Calu3 (cell line): ENCODE measurements at regions of chr6 and their contacts with region 1.

Region 1: GRCh38 chr6:86937219-86938079 is at the start of gene HTR1E:
- DNase-seq: peak; percentile 66
- H3K4me3 Mint-ChIP-seq: peak within 1 kb of the TSS; percentile 62
- H3K27ac Mint-ChIP-seq: no peak within 1 kb of the TSS
- H3K4me1 Mint-ChIP-seq: peaks cover 9% of the 10 kb centered on the region
- H3K27me3 Mint-ChIP-seq: peaks cover 77% of the 10 kb centered on the region
- CTCF ChIP-seq: no peak
- total RNA-seq, gene HTR1E: not detected in 2 replicates

Region 2: GRCh38 chr6:85642774-85643536 is 1294.5 kb before region 1 on chr6 and contains the start of gene SYNCRIP:
- CTCF ChIA-PET with region 1: no interaction called
- intact Hi-C with region 1: loop called (anchors 5 kb)
- DNase-seq: peak; percentile 99
- H3K4me3 Mint-ChIP-seq: peak within 1 kb of the TSS; percentile 88
- H3K27ac Mint-ChIP-seq: peak within 1 kb of the TSS; percentile 89
- H3K4me1 Mint-ChIP-seq: peaks cover 46% of the 10 kb centered on the region
- H3K27me3 Mint-ChIP-seq: no peaks in the 10 kb centered on the region
- CTCF ChIP-seq: no peak
- total RNA-seq, gene SYNCRIP: 153 and 164 TPM in 2 replicates

Region 3: DNA sequence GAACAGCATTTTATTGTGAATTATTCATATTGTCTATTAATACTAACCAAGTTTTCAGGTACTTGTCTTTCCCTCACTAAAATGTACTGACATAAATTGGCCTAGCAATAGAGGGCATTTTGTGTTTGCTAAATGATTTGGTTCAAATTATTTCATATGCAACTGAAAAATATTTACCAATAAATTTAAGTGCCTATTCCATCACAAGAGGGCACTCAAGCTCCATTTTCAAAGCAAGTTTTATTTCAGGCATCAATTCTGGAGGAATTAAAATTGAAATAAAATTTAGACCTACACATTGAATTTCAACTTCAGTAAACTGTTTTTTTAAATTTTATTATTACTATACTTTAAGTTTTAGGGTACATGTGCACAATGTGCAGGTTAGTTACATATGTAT is 1180.5 kb before region 1 on chr6:
- CTCF ChIA-PET with region 1: no interaction called
- intact Hi-C with region 1: loop called (anchors 5 kb)
- DNase-seq: no peak
- H3K4me3 Mint-ChIP-seq: no peak overlapping the region
- H3K27ac Mint-ChIP-seq: no peak overlapping the region
- H3K4me1 Mint-ChIP-seq: peaks cover 7% of the 10 kb centered on the region
- H3K27me3 Mint-ChIP-seq: peaks cover 23% of the 10 kb centered on the region
- CTCF ChIP-seq: peak; percentile 39

Region 4: GRCh38 chr6:85923013-85923430 is 1014.4 kb before region 1 on chr6:
- CTCF ChIA-PET with region 1: interaction called, 9 read pairs
- intact Hi-C with region 1: loop called (anchors 2 kb)
- DNase-seq: peak; percentile 53
- H3K4me3 Mint-ChIP-seq: no peak overlapping the region
- H3K27ac Mint-ChIP-seq: no peak overlapping the region
- H3K4me1 Mint-ChIP-seq: no peaks in the 10 kb centered on the region
- H3K27me3 Mint-ChIP-seq: peaks cover 38% of the 10 kb centered on the region
- CTCF ChIP-seq: peak; percentile 67

Region 5: GRCh38 chr6:86070151-86070550 is 867.3 kb before region 1 on chr6:
- CTCF ChIA-PET with region 1: no interaction called
- intact Hi-C with region 1: loop called (anchors 10 kb)
- DNase-seq: no peak
- H3K4me3 Mint-ChIP-seq: no peak overlapping the region
- H3K27ac Mint-ChIP-seq: no peak overlapping the region
- H3K4me1 Mint-ChIP-seq: no peaks in the 10 kb centered on the region
- H3K27me3 Mint-ChIP-seq: no peaks in the 10 kb centered on the region
- CTCF ChIP-seq: no peak

Region 6: GRCh38 chr6:86856937-86857563 is 80.4 kb before region 1 on chr6:
- CTCF ChIA-PET with region 1: interaction called, 3 read pairs
- intact Hi-C with region 1: loop called (anchors 2 kb)
- DNase-seq: peak; percentile 67
- H3K4me3 Mint-ChIP-seq: no peak overlapping the region
- H3K27ac Mint-ChIP-seq: no peak overlapping the region
- H3K4me1 Mint-ChIP-seq: no peaks in the 10 kb centered on the region
- H3K27me3 Mint-ChIP-seq: no peaks in the 10 kb centered on the region
- CTCF ChIP-seq: peak; percentile 67

Region 7: DNA sequence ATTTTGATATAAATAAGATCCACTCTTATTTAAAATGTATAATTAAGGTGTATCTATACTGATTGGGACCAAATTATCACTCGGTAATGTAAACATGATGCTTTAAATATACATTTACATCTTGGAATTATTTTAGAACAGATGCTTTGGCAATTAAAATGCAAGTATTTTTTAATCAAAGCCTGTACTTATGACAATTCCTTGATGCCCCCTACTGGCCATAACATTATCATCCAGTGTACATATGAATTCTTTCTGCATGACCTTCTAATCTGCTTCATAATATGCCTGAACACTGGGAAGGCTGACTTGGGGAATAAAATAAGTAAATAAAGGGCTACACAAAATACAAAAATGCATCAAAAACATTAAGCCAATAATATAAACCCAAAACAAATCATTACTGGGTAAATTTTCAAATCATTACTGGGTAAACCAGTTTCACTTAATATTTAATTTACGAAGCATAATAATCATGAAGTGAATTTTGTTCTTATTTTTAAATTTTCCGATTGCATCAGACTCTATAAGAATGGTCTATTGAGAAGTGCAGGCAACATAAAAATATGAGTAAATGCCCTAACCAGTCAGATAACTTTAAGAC is 92.4 kb after region 1 on chr6:
- CTCF ChIA-PET with region 1: no interaction called
- intact Hi-C with region 1: loop called (anchors 5 kb)
- DNase-seq: peak; percentile 37
- H3K4me3 Mint-ChIP-seq: no peak overlapping the region
- H3K27ac Mint-ChIP-seq: no peak overlapping the region
- H3K4me1 Mint-ChIP-seq: no peaks in the 10 kb centered on the region
- H3K27me3 Mint-ChIP-seq: peaks cover 27% of the 10 kb centered on the region
- CTCF ChIP-seq: peak; percentile 37

Region 8: GRCh38 chr6:87054143-87054833 is 116.8 kb after region 1 on chr6:
- CTCF ChIA-PET with region 1: no interaction called
- intact Hi-C with region 1: no loop called
- DNase-seq: no peak
- H3K4me3 Mint-ChIP-seq: no peak overlapping the region
- H3K27ac Mint-ChIP-seq: no peak overlapping the region
- H3K4me1 Mint-ChIP-seq: no peaks in the 10 kb centered on the region
- H3K27me3 Mint-ChIP-seq: peaks cover 20% of the 10 kb centered on the region
- CTCF ChIP-seq: no peak

Region 9: DNA sequence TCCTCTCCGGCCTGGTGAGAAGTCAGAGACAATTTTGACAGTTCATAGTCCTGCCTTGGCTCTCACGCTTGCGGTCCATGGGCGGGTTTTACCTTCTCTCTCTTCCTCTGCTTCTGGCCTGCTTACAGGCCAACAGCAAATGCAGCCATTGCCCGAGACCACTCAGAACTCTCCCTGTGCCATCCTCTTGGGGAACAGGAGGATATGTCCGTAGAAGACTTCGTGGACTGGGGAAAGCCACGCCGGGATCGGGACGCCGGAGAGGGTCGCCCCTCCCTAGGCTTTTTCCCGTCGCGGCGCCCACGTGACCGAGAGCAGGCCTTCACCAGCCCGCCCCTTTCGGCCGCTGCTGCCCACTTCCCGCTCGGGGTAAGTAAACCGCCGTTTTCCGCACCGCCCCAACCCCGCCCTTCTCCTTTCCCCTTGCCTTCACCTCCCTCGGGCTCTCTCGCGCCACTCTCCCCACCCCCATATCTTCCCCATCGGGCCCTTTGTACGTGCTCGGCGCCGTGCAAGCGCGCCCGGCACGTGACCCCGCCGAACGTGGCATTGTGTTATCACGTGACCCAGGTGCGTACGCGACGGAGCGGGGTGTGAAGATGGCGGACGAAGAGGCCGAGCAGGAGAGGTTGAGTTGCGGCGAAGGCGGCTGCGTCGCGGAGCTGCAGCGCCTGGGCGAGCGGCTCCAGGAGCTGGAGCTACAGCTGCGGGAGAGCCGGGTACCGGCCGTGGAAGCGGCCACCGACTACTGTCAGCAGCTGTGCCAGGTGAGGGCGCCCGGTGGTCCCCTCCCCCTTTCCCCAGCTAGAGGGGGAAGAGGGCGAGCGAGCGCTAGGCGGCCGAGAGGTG is 217.8 kb after region 1 on chr6 and contains the start of gene ZNF292:
- CTCF ChIA-PET with region 1: no interaction called
- intact Hi-C with region 1: no loop called
- DNase-seq: peak; percentile 98
- H3K4me3 Mint-ChIP-seq: peak within 1 kb of the TSS; percentile 90
- H3K27ac Mint-ChIP-seq: peak within 1 kb of the TSS; percentile 91
- H3K4me1 Mint-ChIP-seq: peaks cover 19% of the 10 kb centered on the region
- H3K27me3 Mint-ChIP-seq: no peaks in the 10 kb centered on the region
- CTCF ChIP-seq: no peak
- total RNA-seq, gene ZNF292: 41.6 and 44.6 TPM in 2 replicates